Activated naive CD4-positive, alpha-beta T cell treated with anti-CD3 and anti-CD28 coated beads, Interleukin-2, amount 10 ng/mL, durations not matched to agents 7 days and 5 days (primary cell): ENCODE measurements at regions of chr16 and their contacts with region 1.

Region 1: DNA sequence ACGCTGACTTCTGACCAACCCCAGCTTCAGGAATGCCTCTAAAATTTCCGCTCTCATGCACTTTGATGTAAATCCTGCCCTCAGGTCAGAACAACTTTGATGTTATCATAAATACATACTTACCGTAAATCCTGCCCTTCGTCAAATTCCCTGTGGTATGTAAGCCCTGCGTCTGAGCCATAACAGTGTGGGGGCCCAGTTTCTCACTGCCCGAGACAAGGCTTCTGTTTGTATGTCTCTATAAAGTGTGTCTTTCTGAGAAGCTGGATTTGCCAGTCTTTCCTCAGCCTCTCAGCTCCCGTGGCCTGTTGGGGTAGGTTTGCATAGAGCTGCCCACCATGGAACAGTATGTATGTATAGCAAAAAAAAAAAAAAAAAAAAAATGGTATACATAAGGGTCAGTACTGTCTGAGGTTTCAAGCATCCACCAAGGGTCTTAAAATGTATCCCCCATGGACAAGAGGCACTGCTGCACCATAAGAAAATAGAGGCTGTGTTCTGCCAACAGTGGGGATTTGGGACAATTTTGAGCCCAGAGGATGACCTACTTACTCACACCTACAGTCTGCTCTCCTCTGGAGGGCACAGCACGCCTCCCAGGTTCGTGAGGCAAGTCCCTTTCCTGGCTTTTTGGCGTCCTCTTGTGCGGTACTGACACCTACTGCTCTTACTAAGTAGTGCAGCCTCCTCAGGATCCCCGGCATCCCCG is 17.5 kb downstream of the PRMT7 start:
- DNase-seq: peak; percentile 86
- H3K4me3 Mint-ChIP-seq: no peak overlapping the region
- H3K27ac Mint-ChIP-seq: no peak overlapping the region
- H3K4me1 Mint-ChIP-seq: peaks cover 21% of the 10 kb centered on the region
- H3K27me3 Mint-ChIP-seq: no peaks in the 10 kb centered on the region

Region 2: DNA sequence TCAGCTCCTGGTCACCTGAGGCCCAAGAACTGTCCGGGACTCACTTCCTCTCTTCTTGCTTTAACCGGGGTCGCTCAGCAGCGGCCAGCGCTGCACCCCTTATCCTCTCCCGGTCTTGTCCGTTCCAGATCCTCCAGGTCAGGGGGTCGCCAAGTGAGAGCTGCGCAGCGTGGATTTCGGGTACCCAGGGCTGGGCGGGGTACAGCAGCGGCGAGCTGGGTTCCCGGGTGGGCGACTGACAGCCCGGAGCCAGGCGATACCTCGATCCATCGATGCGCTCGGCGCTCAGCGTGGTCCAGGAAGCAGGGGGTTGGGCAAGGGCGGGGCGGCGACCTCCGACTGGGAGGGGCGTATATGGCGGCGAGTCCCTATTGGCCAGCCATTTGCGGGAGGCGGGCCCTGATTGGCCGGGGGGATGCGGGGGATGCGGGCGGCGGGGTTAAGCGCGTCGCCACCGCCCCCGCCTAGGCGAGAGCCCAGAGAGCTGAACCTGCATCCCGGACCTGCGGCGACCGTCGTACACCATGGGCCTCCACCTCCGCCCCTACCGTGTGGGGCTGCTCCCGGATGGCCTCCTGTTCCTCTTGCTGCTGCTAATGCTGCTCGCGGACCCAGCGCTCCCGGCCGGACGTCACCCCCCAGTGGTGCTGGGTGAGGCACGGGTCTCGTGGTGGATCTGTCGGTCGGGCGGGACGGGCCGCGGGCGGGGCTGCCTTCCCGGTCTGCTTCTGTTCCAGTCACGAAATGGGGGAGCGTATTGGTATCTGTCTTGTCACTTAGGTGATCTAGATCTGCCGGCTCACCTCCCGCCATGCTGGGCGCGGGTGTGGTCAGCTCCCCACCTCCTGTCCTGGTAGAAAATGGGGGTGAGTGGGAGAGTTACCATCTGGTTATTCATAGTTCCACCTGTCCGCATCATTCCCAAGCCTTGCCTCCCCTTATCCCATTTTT is 83.1 kb before region 1 on chr16 and contains the start of gene PLA2G15:
- CTCF ChIA-PET with region 1: interaction called, 26 read pairs
- DNase-seq: peak; percentile 97
- H3K4me3 Mint-ChIP-seq: peak within 1 kb of the TSS; percentile 96
- H3K27ac Mint-ChIP-seq: peak within 1 kb of the TSS; percentile 78
- H3K4me1 Mint-ChIP-seq: peaks cover 24% of the 10 kb centered on the region
- H3K27me3 Mint-ChIP-seq: peaks cover 26% of the 10 kb centered on the region

Region 3: DNA sequence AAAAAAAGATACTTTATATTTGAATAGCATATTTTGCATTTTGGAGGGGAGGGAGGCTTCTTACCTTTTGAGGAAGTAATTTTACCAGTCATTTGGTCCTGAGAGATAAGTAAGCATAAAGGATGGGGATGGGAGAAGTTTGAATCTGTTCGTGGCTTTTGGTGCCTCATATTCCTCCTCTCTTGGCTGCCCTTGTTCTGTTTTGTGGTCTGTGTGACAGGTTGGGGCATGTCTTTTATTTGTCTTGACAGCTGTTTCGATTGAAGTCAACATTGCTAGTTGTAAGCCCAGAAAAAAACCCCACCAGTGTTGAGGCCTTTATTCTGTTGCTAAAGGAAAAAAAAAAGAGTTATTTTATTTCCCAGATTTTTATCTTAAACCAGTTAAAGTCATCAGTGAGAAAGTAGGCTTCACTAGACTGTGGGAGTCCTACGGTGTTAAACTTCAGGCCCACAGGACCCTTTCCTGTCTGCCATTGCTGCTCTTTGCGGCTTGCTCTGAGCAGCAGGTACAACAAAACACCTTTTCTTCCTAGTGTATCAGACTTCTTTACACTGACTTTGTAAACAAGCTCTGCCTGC is 52.6 kb before region 1 on chr16:
- CTCF ChIA-PET with region 1: interaction called, 11 read pairs
- DNase-seq: peak; percentile 69
- H3K4me3 Mint-ChIP-seq: peak overlapping the region; percentile 39
- H3K27ac Mint-ChIP-seq: peak overlapping the region; percentile 91
- H3K4me1 Mint-ChIP-seq: peaks cover 77% of the 10 kb centered on the region
- H3K27me3 Mint-ChIP-seq: no peaks in the 10 kb centered on the region

Region 4: GRCh38 chr16:68310761-68311511 is 17.4 kb before region 1 on chr16 and contains the starts of genes PRMT7 and SLC7A6OS:
- CTCF ChIA-PET with region 1: interaction called, 10 read pairs
- DNase-seq: peak; percentile 96
- H3K4me3 Mint-ChIP-seq: peak within 1 kb of the TSS; percentile 86
- H3K27ac Mint-ChIP-seq: peak within 1 kb of the TSS; percentile 99
- H3K4me1 Mint-ChIP-seq: peaks cover 51% of the 10 kb centered on the region
- H3K27me3 Mint-ChIP-seq: no peaks in the 10 kb centered on the region